BJ (cell line): ENCODE measurements at regions of chr3 and their contacts with region 1.

Region 1: DNA sequence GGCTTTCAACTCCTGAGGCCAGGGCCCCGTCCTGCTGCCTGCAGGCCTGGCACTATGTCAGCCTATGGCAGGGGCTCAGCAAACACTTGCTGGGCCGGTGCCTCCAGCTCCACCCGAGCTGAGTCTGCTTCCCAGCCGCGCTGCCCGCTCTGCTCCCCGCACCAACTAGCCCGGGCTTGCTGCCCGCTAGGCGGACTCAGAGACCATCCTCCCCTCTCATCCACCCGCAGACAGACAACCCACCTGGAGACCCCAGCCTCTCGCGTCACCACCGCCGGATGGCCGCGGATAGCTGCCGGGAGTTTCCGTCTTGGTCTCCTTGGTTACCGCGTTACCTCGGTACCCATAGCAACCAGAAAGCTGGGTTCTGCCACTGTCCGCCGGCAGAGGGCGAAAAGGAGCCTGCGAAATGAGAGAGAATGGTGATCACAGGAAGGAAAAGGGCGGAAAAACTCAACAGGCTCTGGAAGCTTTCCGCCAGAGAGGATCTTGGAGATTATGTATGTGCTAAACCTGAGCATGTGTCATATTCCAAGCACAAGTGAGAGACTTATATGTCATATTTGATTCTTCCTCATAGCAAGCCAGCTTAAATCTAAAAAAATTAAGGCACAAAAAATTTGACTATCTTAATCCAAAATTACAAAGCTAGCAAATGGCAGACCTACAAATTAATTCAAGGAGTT is at the start of gene ZBBX:
- DNase-seq: peak; percentile 9
- H3K4me3 ChIP-seq: peak within 1 kb of the TSS; percentile 32
- H3K27me3 ChIP-seq: no peaks in the 10 kb centered on the region
- CTCF ChIP-seq: peak; percentile 89
- polyA plus RNA-seq, gene ZBBX: not detected in 2 replicates

Region 2: DNA sequence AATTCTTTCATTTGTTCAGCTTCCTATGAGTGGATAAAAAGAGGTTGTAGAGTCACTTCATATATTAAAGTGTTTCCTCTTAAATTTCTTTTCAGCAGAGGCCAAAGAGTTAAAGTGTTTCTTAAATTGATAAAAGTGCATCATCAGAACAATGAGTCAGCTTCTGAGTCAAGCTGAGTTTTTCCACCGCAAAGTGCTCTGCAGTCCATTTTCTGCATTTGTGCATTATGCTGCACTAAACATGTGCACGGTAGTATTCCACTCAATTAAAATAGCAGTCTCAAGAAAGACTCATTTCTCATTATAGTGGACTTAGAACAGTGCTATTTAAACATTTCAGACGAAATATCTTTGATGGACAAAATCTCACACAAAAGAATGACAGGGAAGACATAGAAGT is 152.0 kb before region 1 on chr3:
- CTCF ChIA-PET with region 1: no interaction called
- POLR2A ChIA-PET with region 1: no interaction called
- DNase-seq: no peak
- H3K4me3 ChIP-seq: no peak overlapping the region
- H3K27me3 ChIP-seq: no peaks in the 10 kb centered on the region
- CTCF ChIP-seq: no peak

Region 3: GRCh38 chr3:167361306-167361705 is 18.8 kb before region 1 on chr3:
- CTCF ChIA-PET with region 1: no interaction called
- POLR2A ChIA-PET with region 1: no interaction called
- DNase-seq: no peak
- H3K4me3 ChIP-seq: no peak overlapping the region
- H3K27me3 ChIP-seq: no peaks in the 10 kb centered on the region
- CTCF ChIP-seq: no peak

Region 4: GRCh38 chr3:167394003-167394402 is 13.9 kb after region 1 on chr3:
- CTCF ChIA-PET with region 1: interaction called, 19 read pairs
- POLR2A ChIA-PET with region 1: no interaction called
- DNase-seq: no peak
- H3K4me3 ChIP-seq: no peak overlapping the region
- H3K27me3 ChIP-seq: no peaks in the 10 kb centered on the region
- CTCF ChIP-seq: no peak

Region 5: GRCh38 chr3:167740961-167741587 is 360.9 kb after region 1 on chr3:
- CTCF ChIA-PET with region 1: interaction called, 17 read pairs
- POLR2A ChIA-PET with region 1: no interaction called
- DNase-seq: no peak
- H3K4me3 ChIP-seq: no peak overlapping the region
- H3K27me3 ChIP-seq: no peaks in the 10 kb centered on the region
- CTCF ChIP-seq: peak; percentile 58

Region 6: DNA sequence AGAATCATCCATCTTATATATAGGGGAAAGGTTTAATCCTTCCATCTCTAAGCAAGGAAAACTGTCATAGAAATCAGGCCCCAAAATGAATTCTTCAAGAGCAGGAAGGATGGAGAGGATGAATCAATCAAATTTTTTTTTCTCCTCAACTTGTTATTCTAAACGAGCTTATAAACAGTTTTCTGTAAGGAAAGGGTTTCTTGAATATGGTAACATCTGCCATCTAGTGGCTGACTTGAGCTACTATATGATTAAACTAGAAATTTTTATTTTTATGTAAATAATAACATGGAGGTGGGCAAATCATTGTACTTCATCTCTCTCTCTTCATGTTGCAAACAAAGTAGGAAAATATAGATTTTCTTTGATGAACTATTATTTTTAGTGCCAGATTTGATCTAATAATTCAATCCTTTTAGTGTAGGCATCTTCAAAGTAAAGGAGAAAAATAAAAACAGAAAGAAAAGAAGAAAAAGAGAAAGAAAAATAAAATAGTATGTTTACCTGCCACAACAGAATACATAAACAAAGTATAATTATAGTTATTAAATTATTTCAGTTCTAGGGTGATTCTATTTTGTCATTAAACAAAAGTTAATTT is 502.0 kb after region 1 on chr3:
- CTCF ChIA-PET with region 1: interaction called, 25 read pairs
- POLR2A ChIA-PET with region 1: no interaction called
- DNase-seq: no peak
- H3K4me3 ChIP-seq: no peak overlapping the region
- H3K27me3 ChIP-seq: no peaks in the 10 kb centered on the region
- CTCF ChIP-seq: peak; percentile 61